ENCODE measurements at regions of chr5 and their contacts with region 1.

Region 1: GRCh38 chr5:55159763-55160492 is at the start of gene GPX8:
- DNase-seq: peak; percentile 78
- H3K4me3 ChIP-seq: peak within 1 kb of the TSS; percentile 78
- H3K27ac ChIP-seq: peak within 1 kb of the TSS; percentile 85
- H3K27me3 ChIP-seq: no peaks in the 10 kb centered on the region
- CTCF ChIP-seq: peak; percentile 66
- polyA plus RNA-seq, gene GPX8: 234 and 317 TPM in 2 replicates

Region 2: GRCh38 chr5:54001976-54002775 is 1157.8 kb before region 1 on chr5:
- CTCF ChIA-PET with region 1: no interaction called
- POLR2A ChIA-PET with region 1: no interaction called
- DNase-seq: no peak
- H3K4me3 ChIP-seq: no peak overlapping the region
- H3K27ac ChIP-seq: no peak overlapping the region
- H3K27me3 ChIP-seq: no peaks in the 10 kb centered on the region
- CTCF ChIP-seq: no peak

Region 3: DNA sequence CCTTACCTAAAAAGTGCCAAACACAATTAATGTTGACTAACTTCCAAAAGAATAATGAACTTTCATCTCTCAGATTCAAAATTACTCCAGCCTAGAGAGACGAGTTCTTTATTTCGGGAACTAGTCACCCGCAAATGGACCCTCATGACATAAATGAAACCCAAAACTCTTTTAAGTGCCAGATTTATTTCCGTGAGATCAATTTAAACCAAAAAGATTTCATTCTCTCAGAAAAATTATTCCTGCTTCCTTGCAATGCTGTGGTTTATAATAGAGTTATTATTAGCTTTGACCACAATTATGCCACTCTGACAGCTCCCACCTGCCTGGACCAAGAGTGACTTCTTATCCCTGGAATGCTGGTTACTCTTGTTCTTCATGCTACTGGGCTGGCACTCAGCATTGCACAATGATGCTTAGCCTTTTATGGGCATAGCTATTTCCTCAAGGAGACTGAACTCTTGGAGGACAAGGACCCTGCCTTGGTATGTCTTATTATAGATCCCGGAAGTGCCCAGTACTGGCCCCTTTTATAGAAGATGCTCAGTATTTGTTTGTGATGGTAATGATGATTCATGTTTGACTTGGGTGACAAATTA is 458.8 kb before region 1 on chr5:
- CTCF ChIA-PET with region 1: no interaction called
- POLR2A ChIA-PET with region 1: interaction called, 10 read pairs
- DNase-seq: peak; percentile 97
- H3K4me3 ChIP-seq: no peak overlapping the region
- H3K27ac ChIP-seq: peak overlapping the region; percentile 68
- H3K27me3 ChIP-seq: no peaks in the 10 kb centered on the region
- CTCF ChIP-seq: no peak

Region 4: DNA sequence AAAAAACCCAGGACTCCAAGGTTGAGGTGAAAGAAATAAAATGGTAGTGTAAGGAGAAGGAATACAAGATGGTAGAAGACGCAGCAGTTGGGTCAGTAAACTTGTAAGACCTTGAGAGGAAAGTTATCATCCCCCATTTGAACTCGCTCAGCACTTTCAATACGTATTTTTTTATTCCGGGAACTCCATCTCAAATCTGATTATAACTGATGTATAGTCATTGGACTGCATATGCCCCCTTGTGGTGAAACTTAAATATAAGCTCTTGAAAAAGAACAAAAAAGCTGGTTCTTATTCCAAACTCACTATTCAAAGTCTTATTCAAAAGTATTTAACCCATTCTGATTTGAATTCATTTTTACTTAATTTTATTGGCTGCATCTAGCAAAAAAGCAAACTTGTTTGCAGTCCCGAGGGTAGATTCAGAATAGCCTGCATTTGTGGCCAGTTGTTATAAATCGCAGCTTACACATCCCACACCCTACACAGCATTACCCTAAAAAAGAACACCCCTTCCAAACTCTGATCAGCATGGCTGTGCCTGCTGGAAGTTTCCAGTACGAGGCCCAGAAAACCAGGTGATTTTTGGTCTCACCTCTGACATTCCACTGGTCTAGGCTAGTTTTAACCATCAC is 292.5 kb before region 1 on chr5:
- CTCF ChIA-PET with region 1: interaction called, 11 read pairs
- POLR2A ChIA-PET with region 1: interaction called, 5 read pairs
- DNase-seq: no peak
- H3K4me3 ChIP-seq: no peak overlapping the region
- H3K27ac ChIP-seq: no peak overlapping the region
- H3K27me3 ChIP-seq: peaks cover 6% of the 10 kb centered on the region
- CTCF ChIP-seq: peak; percentile 62

Region 5: GRCh38 chr5:54874373-54874921 is 285.5 kb before region 1 on chr5:
- CTCF ChIA-PET with region 1: interaction called, 10 read pairs
- POLR2A ChIA-PET with region 1: interaction called, 4 read pairs
- DNase-seq: no peak
- H3K4me3 ChIP-seq: no peak overlapping the region
- H3K27ac ChIP-seq: no peak overlapping the region
- H3K27me3 ChIP-seq: peaks cover 10% of the 10 kb centered on the region
- CTCF ChIP-seq: no peak

Region 6: GRCh38 chr5:54905943-54906537 is 253.9 kb before region 1 on chr5:
- CTCF ChIA-PET with region 1: interaction called, 85 read pairs
- POLR2A ChIA-PET with region 1: interaction called, 12 read pairs
- DNase-seq: peak; percentile 59
- H3K4me3 ChIP-seq: no peak overlapping the region
- H3K27ac ChIP-seq: no peak overlapping the region
- H3K27me3 ChIP-seq: no peaks in the 10 kb centered on the region
- CTCF ChIP-seq: peak; percentile 79

Region 7: GRCh38 chr5:55134053-55134722 is 25.7 kb before region 1 on chr5:
- CTCF ChIA-PET with region 1: no interaction called
- POLR2A ChIA-PET with region 1: no interaction called
- DNase-seq: no peak
- H3K4me3 ChIP-seq: no peak overlapping the region
- H3K27ac ChIP-seq: no peak overlapping the region
- H3K27me3 ChIP-seq: peaks cover 10% of the 10 kb centered on the region
- CTCF ChIP-seq: no peak

Region 8: GRCh38 chr5:55146543-55147151 is 13.3 kb before region 1 on chr5:
- CTCF ChIA-PET with region 1: interaction called, 12 read pairs
- POLR2A ChIA-PET with region 1: no interaction called
- DNase-seq: peak; percentile 67
- H3K4me3 ChIP-seq: no peak overlapping the region
- H3K27ac ChIP-seq: no peak overlapping the region
- H3K27me3 ChIP-seq: peaks cover 12% of the 10 kb centered on the region
- CTCF ChIP-seq: peak; percentile 99

Region 9: GRCh38 chr5:55172051-55172899 is 12.3 kb after region 1 on chr5:
- CTCF ChIA-PET with region 1: interaction called, 18 read pairs
- POLR2A ChIA-PET with region 1: no interaction called
- DNase-seq: peak; percentile 36
- H3K4me3 ChIP-seq: peak overlapping the region; percentile 61
- H3K27ac ChIP-seq: no peak overlapping the region
- H3K27me3 ChIP-seq: peaks cover 38% of the 10 kb centered on the region
- CTCF ChIP-seq: peak; percentile 87

Region 10: DNA sequence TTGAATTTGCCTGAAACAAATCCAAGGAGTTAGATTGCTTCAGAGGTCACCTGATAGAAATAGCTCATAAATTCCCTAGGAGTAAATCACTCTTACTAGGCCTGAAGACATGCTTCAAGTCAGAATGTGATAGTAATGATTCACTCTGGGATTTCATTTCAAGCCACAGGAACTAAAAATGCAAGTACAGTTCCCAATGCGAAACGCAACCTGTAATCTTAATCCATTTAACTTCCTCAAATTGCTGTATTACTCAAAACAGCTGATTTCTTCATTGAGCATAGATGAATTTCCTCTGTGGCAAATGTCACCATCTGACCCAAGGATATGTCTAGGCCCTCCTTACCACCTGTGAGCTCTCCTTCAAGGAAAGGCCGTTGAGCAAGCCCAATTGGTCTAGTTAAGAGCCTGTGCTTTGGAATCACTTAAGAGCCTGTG is 867.0 kb after region 1 on chr5:
- CTCF ChIA-PET with region 1: no interaction called
- POLR2A ChIA-PET with region 1: no interaction called
- DNase-seq: peak; percentile 72
- H3K4me3 ChIP-seq: no peak overlapping the region
- H3K27ac ChIP-seq: peak overlapping the region; percentile 76
- H3K27me3 ChIP-seq: no peaks in the 10 kb centered on the region
- CTCF ChIP-seq: no peak